MCF 10A (cell line): ENCODE measurements at regions of chr9 and their contacts with region 1.

Region 1: DNA sequence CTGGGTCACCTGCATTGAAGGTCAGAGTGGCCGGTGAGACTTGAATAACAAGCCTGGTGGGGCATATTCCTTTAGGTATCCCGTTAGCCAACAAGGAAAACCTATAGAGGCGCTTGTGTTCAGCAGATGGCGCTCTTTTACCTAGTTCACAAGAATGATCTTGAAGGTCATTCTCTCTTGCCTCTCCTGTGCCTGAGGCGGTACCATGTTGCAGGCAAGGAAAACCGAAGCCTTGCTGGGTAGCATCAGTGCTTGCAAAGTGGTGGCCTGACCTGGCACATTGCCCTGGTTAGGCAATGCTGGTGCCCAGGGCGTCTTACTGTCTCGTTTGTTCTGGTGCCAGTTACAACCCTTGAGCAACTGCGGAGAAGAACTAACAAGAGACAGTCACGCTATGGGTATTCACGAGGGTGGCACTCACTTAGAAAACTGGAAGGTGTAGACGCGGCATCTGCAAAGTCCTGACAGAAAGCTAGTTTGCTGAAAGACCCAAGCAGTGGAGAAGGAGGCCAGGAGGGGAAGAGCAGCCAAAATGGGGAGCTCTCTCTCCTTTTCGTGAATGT is 56.7 kb downstream of the AOPEP start:
- DNase-seq: peak; percentile 100
- H3K4me3 Mint-ChIP-seq: no peak overlapping the region
- H3K27ac Mint-ChIP-seq: no peak overlapping the region
- H3K4me1 Mint-ChIP-seq: peaks cover 23% of the 10 kb centered on the region
- H3K27me3 Mint-ChIP-seq: no peaks in the 10 kb centered on the region
- CTCF ChIP-seq: peak; percentile 70

Region 2: DNA sequence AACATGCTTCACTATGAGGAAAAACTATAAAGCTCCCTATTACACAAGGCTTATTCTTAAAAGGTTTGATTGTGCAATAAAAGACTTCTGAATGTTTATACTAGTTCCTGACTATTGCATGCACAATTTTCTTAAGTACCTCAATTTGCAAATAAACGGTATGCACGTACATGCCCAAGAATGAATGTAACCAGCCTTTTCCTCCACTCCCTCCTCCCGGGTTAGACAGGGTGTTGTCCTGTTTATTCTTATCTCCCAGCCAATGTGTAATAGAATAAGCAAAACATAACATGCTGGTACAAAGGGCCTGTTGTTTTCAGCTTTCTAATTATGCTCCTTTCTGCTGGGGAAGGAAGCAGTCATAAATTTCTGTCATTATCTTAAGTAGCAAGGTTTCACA is 22.4 kb after region 1 on chr9:
- CTCF ChIA-PET with region 1: interaction called, 35 read pairs
- POLR2A ChIA-PET with region 1: interaction called, 157 read pairs
- intact Hi-C with region 1: loop called (anchors 1 kb)
- DNase-seq: peak; percentile 93
- H3K4me3 Mint-ChIP-seq: peak overlapping the region; percentile 51
- H3K27ac Mint-ChIP-seq: peak overlapping the region; percentile 100
- H3K4me1 Mint-ChIP-seq: peaks cover 50% of the 10 kb centered on the region
- H3K27me3 Mint-ChIP-seq: no peaks in the 10 kb centered on the region
- CTCF ChIP-seq: no peak

Region 3: GRCh38 chr9:94928691-94929372 is 145.6 kb after region 1 on chr9:
- CTCF ChIA-PET with region 1: interaction called, 5 read pairs
- POLR2A ChIA-PET with region 1: interaction called, 6 read pairs
- intact Hi-C with region 1: loop called (anchors 1 kb)
- DNase-seq: no peak
- H3K4me3 Mint-ChIP-seq: peak overlapping the region; percentile 6
- H3K27ac Mint-ChIP-seq: peak overlapping the region; percentile 89
- H3K4me1 Mint-ChIP-seq: peaks cover 56% of the 10 kb centered on the region
- H3K27me3 Mint-ChIP-seq: no peaks in the 10 kb centered on the region
- CTCF ChIP-seq: no peak

Region 4: DNA sequence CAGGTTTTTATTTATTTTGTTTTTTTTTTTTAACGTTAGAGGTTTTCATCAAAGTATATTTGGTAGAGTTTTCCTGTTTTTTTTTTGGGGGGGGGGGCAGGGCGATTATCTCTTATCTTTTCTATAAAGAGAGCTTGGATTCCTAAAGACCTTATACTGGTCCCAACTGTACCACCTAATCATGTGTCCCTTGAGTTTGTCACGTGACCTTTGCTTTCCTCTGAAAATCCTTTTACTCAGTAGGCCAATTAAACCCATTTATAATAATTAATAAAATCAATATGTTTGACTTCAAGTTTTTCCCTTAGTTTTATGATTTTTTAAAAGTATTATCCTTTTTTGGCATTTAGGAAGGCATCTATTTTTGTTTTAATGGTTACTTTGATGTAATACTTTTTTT is 229.7 kb after region 1 on chr9:
- CTCF ChIA-PET with region 1: interaction called, 25 read pairs
- POLR2A ChIA-PET with region 1: interaction called, 81 read pairs
- intact Hi-C with region 1: loop called (anchors 1 kb)
- DNase-seq: no peak
- H3K4me3 Mint-ChIP-seq: no peak overlapping the region
- H3K27ac Mint-ChIP-seq: no peak overlapping the region
- H3K4me1 Mint-ChIP-seq: peaks cover 21% of the 10 kb centered on the region
- H3K27me3 Mint-ChIP-seq: no peaks in the 10 kb centered on the region
- CTCF ChIP-seq: no peak

Region 5: DNA sequence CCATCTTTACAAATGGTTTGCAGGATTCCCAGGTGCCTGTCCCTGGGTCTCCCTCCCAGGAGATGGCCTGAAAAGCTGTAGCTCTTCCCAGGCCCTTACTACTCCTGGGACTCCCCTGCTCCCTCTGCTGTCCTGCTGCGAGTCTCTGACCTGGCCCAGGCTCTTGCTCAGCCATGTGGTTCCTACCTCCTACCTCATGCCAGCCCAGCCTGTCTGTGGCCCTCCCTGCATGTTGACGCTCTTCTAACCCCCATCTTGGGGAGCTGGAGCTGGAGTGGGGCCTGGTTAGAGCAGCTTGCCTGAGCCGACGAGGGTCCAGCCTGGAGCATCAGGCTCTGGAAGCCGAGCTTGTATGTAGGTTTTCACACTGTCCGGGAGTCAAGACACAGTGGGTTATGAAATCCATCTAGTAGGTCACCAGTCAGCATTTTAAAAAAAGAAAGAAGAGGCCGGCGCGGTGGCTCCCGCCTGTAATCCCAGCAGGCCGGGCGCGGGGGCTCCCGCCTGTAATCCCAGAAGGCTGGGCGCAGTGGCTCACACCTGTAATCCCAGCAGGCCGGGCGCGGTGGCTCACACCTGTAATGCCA is 289.9 kb after region 1 on chr9:
- CTCF ChIA-PET with region 1: interaction called, 4 read pairs
- POLR2A ChIA-PET with region 1: no interaction called
- intact Hi-C with region 1: loop called (anchors 1 kb)
- DNase-seq: no peak
- H3K4me3 Mint-ChIP-seq: no peak overlapping the region
- H3K27ac Mint-ChIP-seq: no peak overlapping the region
- H3K4me1 Mint-ChIP-seq: peaks cover 9% of the 10 kb centered on the region
- H3K27me3 Mint-ChIP-seq: no peaks in the 10 kb centered on the region
- CTCF ChIP-seq: no peak